Breast epithelium (tissue), 4 donors: ENCODE measurements at regions of chrX and their contacts with region 1.

Region 1: DNA sequence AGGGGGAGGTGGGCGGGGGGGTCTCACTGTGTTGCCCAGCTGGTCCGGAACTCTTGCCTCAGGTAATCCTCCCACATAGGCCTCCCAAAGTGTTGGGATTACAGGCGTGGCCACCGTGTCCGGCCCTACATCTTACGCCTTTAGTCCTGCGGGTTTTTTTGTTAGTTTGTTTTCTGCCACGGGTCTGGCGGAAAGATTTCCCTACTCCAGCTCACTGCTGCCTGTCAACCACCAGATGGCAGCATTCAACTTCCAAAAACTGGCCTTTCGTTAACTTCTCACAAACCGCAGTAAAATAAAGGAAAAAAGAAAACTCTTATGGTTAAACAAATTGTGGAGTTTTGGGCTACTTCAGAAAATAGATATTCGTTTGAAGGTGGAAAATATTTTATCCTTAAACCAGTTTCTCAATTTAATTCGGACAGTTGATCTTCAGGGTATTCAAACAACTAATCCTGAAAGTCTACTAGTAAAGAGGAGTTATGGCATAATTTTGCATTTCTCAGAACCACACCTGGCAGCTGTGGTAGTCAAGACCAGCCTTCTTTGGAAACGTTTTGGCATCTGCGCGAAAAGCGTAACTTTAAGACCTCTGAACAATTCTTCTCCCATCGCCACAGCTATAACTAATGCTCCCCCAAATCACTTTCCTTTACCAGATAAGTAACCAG is 41.1 kb downstream of the LUZP4 start:
- DNase-seq: peak in 1 of 2 donors; percentile 24
- H3K4me3 ChIP-seq: peak overlapping the region in 1 of 3 donors; percentile 21
- H3K27ac ChIP-seq: no peak overlapping the region
- H3K4me1 ChIP-seq: peaks cover 0 to 3% of the 10 kb centered on the region in 2 donors
- H3K27me3 ChIP-seq: peaks cover 0 to 67% of the 10 kb centered on the region in 2 donors
- CTCF ChIP-seq: peak; percentile 55 to 79 (median 57)
- POLR2A ChIP-seq: no peak

Region 2: GRCh38 chrX:115311601-115312001 is 19.0 kb before region 1 on chrX:
- intact Hi-C with region 1: loop called (anchors 2 kb)
- DNase-seq: no peak
- H3K4me3 ChIP-seq: no peak overlapping the region
- H3K27ac ChIP-seq: no peak overlapping the region
- H3K4me1 ChIP-seq: no peaks in the 10 kb centered on the region
- H3K27me3 ChIP-seq: peaks cover 0 to 49% of the 10 kb centered on the region in 2 donors
- CTCF ChIP-seq: no peak
- POLR2A ChIP-seq: no peak

Region 3: DNA sequence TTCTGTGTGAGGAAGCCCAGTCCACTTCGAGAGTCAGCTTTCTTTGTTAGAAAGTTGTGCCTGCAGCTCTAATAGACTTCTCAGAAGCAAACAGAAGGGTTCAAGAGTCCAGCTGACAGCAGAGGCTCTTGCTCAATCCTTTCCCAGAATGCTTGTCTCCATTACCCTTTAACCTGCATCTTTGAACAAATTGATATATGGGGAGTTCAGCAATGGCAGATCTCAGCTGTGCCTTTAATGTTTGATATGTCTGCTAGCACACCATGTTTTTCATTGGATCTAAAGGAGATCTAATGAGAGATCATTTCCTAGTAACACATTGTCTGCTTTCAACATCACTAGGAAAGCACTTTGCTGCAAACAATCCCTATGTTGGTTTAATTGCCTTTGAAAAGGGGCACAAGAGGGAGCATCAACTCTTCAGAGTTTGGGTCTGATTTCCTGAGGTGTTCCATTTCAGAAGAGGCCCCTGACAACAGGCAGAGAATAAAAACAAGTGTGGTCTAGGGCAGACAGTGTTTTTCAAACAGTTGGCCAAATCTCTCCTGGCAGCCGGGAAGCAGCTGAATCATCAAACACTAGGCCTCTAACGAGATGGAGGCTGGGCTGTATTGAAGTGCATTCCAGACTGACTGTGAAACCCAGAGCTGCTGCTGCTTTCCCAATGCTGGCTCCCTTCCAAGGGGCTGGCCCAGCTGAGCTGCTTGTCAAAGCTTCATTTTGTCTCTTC is 14.4 kb after region 1 on chrX:
- intact Hi-C with region 1: no loop called
- DNase-seq: peak; percentile 64 to 84
- H3K4me3 ChIP-seq: no peak overlapping the region
- H3K27ac ChIP-seq: peak overlapping the region; percentile 82 to 89
- H3K4me1 ChIP-seq: no peaks in the 10 kb centered on the region
- H3K27me3 ChIP-seq: peaks cover 0 to 59% of the 10 kb centered on the region in 2 donors
- CTCF ChIP-seq: no peak
- POLR2A ChIP-seq: no peak

Region 4: GRCh38 chrX:115642895-115643530 is 312.4 kb after region 1 on chrX:
- intact Hi-C with region 1: loop called (anchors 10 kb)
- DNase-seq: no peak
- H3K4me3 ChIP-seq: no peak overlapping the region
- H3K27ac ChIP-seq: peak overlapping the region in 1 of 2 donors; percentile 49
- H3K4me1 ChIP-seq: no peaks in the 10 kb centered on the region
- H3K27me3 ChIP-seq: peaks cover 0 to 37% of the 10 kb centered on the region in 2 donors
- CTCF ChIP-seq: peak; percentile 75 to 92 (median 90)
- POLR2A ChIP-seq: no peak